K562 (cell line): ENCODE measurements at regions of chr2 and their contacts with region 1.

Region 1: DNA sequence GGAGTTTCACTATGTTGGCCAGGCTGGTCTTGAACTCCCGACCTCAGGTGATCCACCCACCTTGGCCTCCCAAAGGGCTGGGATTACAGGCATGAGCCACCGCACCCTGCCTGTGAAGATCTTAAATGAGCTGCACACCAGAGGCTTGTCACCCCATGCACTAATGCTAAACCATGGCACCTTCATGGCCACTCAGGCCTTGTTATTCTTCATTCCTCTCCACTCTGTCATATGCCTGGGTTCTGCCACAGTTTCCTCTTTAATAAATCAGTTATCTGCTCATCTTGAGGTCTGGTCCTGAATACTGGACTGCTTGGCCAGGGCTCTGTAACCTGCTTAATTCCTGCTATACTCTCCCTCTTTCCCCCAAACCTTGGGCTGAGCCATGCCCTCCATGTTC is 303.9 kb upstream of the FBXO11 start:
- DNase-seq: no peak
- ATAC-seq: no peak
- H3K4me3 ChIP-seq: no peak overlapping the region
- H3K27ac ChIP-seq: no peak overlapping the region
- H3K4me1 ChIP-seq: peaks cover 3 to 24% of the 10 kb centered on the region in 2 experiments; a peak in 3 of 5 replicates
- H3K27me3 ChIP-seq: no peaks in the 10 kb centered on the region
- CTCF ChIP-seq: no peak
- EP300 ChIP-seq: no peak
- POLR2A ChIP-seq: no peak
- RAD21 ChIP-seq: no peak

Region 2: DNA sequence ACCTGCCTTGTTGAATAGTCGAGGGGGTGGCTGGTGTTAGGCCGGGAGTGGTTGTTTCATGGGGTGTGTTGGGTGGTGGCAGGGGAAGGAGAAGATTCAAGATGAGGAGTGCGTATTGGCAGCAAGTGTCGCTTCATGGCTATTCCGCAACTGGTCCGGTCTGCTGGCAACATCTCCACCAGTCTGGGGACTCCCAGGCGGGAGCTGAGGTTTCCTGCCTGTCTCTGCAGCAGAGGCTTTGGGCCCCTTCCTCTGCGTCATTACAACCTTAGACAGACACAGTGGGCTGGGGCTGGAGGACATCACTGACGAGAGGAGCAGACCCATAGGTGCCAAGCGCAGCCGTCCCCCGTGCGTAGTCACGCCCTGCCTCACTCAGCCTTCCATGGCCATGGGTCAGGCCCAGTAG is 1230.6 kb before region 1 on chr2:
- CTCF ChIA-PET with region 1: no interaction called
- POLR2A ChIA-PET with region 1: no interaction called
- in situ Hi-C with region 1: no loop called
- intact Hi-C with region 1: no loop called
- DNase-seq: no peak
- ATAC-seq: no peak
- H3K4me3 ChIP-seq: no peak overlapping the region
- H3K27ac ChIP-seq: no peak overlapping the region
- H3K4me1 ChIP-seq: peaks cover 39 to 41% of the 10 kb centered on the region in 2 experiments
- H3K27me3 ChIP-seq: no peaks in the 10 kb centered on the region
- CTCF ChIP-seq: no peak
- EP300 ChIP-seq: no peak
- POLR2A ChIP-seq: no peak
- RAD21 ChIP-seq: no peak

Region 3: GRCh38 chr2:48265169-48266030 is 55.2 kb after region 1 on chr2:
- CTCF ChIA-PET with region 1: no interaction called
- POLR2A ChIA-PET with region 1: no interaction called
- in situ Hi-C with region 1: no loop called
- intact Hi-C with region 1: loop called (anchors 5 kb)
- DNase-seq: peak; percentile 58 to 94 (median 80)
- ATAC-seq: peak; percentile 86
- H3K4me3 ChIP-seq: no peak overlapping the region
- H3K27ac ChIP-seq: peak overlapping the region; percentile 90
- H3K4me1 ChIP-seq: peaks cover 4 to 33% of the 10 kb centered on the region in 2 experiments
- H3K27me3 ChIP-seq: no peaks in the 10 kb centered on the region
- CTCF ChIP-seq: no peak
- EP300 ChIP-seq: peak; percentile 98
- POLR2A ChIP-seq: no peak
- RAD21 ChIP-seq: peak; percentile 37 to 38

Region 4: GRCh38 chr2:48870503-48870902 is 660.3 kb after region 1 on chr2:
- CTCF ChIA-PET with region 1: no interaction called
- POLR2A ChIA-PET with region 1: no interaction called
- in situ Hi-C with region 1: no loop called
- intact Hi-C with region 1: no loop called
- DNase-seq: no peak
- ATAC-seq: no peak
- H3K4me3 ChIP-seq: no peak overlapping the region
- H3K27ac ChIP-seq: no peak overlapping the region
- H3K4me1 ChIP-seq: no peaks in the 10 kb centered on the region
- H3K27me3 ChIP-seq: no peaks in the 10 kb centered on the region
- CTCF ChIP-seq: no peak
- EP300 ChIP-seq: no peak
- POLR2A ChIP-seq: no peak
- RAD21 ChIP-seq: no peak